ENCODE measurements at regions of chr12 and their contacts with region 1.

Region 1: DNA sequence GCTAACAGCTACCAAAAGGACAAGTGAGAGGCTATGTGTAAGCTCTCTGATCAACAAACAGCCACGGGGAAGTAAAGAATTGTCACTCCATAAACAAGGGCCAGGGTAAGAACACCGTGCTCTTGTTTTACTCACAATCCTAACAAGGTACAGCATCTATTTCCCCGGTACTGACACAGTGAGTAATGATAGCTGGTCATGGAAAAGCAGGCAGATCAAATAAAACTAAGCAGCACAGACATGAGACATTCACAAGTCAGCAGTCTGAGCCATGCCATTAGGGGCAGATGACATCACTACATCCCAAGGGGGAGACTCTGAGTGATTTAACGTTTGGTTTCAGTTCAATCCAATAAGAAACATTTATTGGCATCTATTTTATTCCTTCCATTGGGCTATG is 54.4 kb downstream of the ARL6IP4 start:
- DNase-seq: peak in 1 of 35 experiments; percentile 22
- ATAC-seq: peak in 1 of 4 experiments; percentile 63
- H3K4me3 ChIP-seq: no peak overlapping the region
- H3K4me3 Mint-ChIP-seq: peak overlapping the region in 1 of 3 donors; percentile 57
- H3K27ac ChIP-seq: no peak overlapping the region
- H3K27ac Mint-ChIP-seq: no peak overlapping the region
- H3K4me1 ChIP-seq: peaks cover 16 to 19% of the 10 kb centered on the region in 2 experiments
- H3K4me1 Mint-ChIP-seq: peaks cover 22 to 52% (median 23%) of the 10 kb centered on the region in 3 donors
- H3K27me3 ChIP-seq: no peaks in the 10 kb centered on the region
- H3K27me3 Mint-ChIP-seq: no peaks in the 10 kb centered on the region

Region 2: GRCh38 chr12:123075646-123076171 is 40.8 kb after region 1 on chr12:
- CTCF ChIA-PET with region 1: no interaction called
- POLR2A ChIA-PET with region 1: interaction called in 1 of 2 experiments, 10 read pairs
- DNase-seq: peak; percentile 53 to 81 (median 69)
- ATAC-seq: peak; percentile 84 to 91 (median 85)
- H3K4me3 ChIP-seq: peak overlapping the region; percentile 50 to 68
- H3K4me3 Mint-ChIP-seq: peak overlapping the region; percentile 77 to 84 (median 82)
- H3K27ac ChIP-seq: peak overlapping the region; percentile 87
- H3K27ac Mint-ChIP-seq: peak overlapping the region; percentile 92 to 96
- H3K4me1 ChIP-seq: peaks cover 35 to 71% of the 10 kb centered on the region in 2 experiments
- H3K4me1 Mint-ChIP-seq: peaks cover 63 to 67% (median 65%) of the 10 kb centered on the region in 3 donors
- H3K27me3 ChIP-seq: no peaks in the 10 kb centered on the region
- H3K27me3 Mint-ChIP-seq: no peaks in the 10 kb centered on the region

Region 3: DNA sequence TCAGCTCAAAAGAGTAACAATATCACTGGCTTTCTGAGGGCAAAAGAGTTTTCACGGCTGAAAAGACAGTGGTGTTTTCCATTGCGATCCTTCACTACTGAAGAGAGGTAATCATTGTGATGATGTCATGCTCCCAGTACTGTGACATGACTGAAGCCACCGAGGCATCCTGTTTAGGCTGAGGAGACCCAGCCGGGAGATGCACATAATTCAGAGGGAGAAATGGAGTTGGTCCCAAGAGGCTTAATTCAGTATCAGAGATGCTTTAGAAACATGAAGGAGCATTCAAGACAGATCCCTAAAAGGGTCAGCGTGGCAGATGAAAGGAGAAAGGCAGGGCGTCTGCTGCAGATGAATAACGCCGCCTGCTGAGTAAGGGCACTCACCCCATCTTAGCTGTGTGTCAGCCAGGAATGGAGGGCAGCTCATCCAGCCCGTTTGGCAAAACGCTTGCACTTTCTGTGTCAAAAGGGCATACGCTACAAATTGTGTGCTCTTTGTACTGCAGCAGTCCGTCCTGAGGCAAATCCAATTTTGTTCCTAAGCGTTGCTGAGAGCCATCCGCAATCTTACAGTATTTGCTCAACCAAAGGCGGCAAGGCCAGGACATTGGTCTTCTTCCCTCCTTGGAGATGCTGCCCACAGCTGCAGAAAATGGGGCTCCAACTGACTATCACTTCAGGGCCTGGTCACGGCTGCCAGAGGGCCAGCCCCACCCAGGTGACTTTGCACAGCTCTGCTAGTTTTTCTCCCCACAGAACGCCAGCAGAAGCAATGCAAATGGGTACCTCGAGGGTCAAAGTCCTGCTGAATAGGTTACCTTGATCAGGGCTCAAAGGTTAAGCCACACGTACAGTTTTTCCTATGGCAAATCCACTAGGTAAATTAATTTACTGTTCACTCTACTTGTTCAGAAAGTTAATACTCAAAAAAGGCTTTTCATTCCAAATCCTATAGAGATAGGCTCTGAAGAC is 914.2 kb after region 1 on chr12:
- CTCF ChIA-PET with region 1: no interaction called
- POLR2A ChIA-PET with region 1: interaction called in 1 of 2 experiments, 11 read pairs
- DNase-seq: no peak
- ATAC-seq: no peak
- H3K4me3 ChIP-seq: no peak overlapping the region
- H3K4me3 Mint-ChIP-seq: no peak overlapping the region
- H3K27ac ChIP-seq: no peak overlapping the region
- H3K27ac Mint-ChIP-seq: no peak overlapping the region
- H3K4me1 ChIP-seq: no peaks in the 10 kb centered on the region
- H3K4me1 Mint-ChIP-seq: peaks cover 3 to 8% (median 5%) of the 10 kb centered on the region in 3 donors
- H3K27me3 ChIP-seq: no peaks in the 10 kb centered on the region
- H3K27me3 Mint-ChIP-seq: no peaks in the 10 kb centered on the region